Naive thymus-derived CD4-positive, alpha-beta T cell (primary cell): ENCODE measurements at regions of chr12 and their contacts with region 1.

Region 1: GRCh38 chr12:57213058-57213715 is 3.4 kb upstream of the NXPH4 start:
- DNase-seq: peak; percentile 67 to 86 (median 81)
- ATAC-seq: peak; percentile 84
- H3K4me3 ChIP-seq: no peak overlapping the region
- H3K4me3 Mint-ChIP-seq: peak overlapping the region in 8 of 10 donors; percentile 5 to 42 (median 24)
- H3K27ac ChIP-seq: no peak overlapping the region
- H3K27ac Mint-ChIP-seq: peak overlapping the region in 4 of 9 donors; percentile 10 to 90 (median 50)
- H3K4me1 ChIP-seq: peaks cover 27 to 34% of the 10 kb centered on the region in 2 donors
- H3K4me1 Mint-ChIP-seq: peaks cover 28 to 40% (median 34%) of the 10 kb centered on the region in 7 donors
- H3K27me3 ChIP-seq: peaks cover 9 to 41% of the 10 kb centered on the region in 2 donors
- H3K27me3 Mint-ChIP-seq: peaks cover 38 to 45% (median 40%) of the 10 kb centered on the region in 5 donors

Region 2: GRCh38 chr12:57229634-57230380 is 16.6 kb after region 1 on chr12 and contains the start of gene SHMT2:
- CTCF ChIA-PET with region 1: interaction called, 40 read pairs
- POLR2A ChIA-PET with region 1: interaction called, 13 read pairs
- intact Hi-C with region 1: loop called (anchors 1 kb)
- DNase-seq: peak; percentile 73 to 92 (median 88)
- ATAC-seq: peak; percentile 62
- H3K4me3 ChIP-seq: peak within 1 kb of the TSS; percentile 82
- H3K4me3 Mint-ChIP-seq: peak within 1 kb of the TSS; percentile 88 to 99 (median 92)
- H3K27ac ChIP-seq: peak within 1 kb of the TSS; percentile 69
- H3K27ac Mint-ChIP-seq: peak within 1 kb of the TSS; percentile 3 to 95 (median 84)
- H3K4me1 ChIP-seq: peaks cover 21 to 46% of the 10 kb centered on the region in 2 donors
- H3K4me1 Mint-ChIP-seq: peaks cover 38 to 66% (median 55%) of the 10 kb centered on the region in 7 donors
- H3K27me3 ChIP-seq: peaks cover 6 to 12% of the 10 kb centered on the region in 2 donors
- H3K27me3 Mint-ChIP-seq: peaks cover 11 to 28% (median 23%) of the 10 kb centered on the region in 5 donors
- total RNA-seq, gene SHMT2: 21.7 to 175 (median 36.1) TPM

Region 3: DNA sequence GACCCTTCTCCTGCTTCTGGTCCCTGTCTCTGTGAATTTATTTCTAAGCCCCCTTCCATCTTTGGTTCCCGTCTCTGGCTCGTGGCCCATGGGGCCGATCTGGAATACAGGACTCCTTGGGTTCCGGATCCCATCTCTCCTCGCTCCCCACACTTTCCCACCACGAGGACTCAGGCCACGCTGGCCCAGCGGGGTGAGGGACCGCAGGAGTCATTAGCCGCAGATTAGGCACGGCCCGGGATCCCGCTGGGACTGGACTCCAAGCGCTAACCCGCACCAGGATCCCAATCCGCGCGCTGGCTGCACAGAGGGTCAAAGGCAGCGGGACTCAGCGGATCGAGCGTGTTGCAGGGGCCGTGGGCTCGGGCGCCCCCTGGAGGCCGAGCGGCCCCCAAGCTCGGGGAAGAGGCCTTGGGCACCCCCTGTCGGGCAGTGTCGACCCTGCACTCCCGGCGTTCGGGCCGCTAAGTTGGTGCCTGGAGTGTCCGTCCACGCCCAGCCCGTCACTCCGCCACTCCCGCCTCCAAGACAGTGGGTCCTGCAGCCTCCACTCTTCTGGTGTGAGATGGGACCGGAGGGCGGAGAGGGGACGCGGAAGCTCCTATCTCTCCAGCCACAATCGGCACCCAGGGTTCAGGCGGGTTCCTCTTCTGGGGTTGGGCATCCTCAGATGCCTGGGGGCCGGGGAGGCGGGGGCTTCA is 25.8 kb after region 1 on chr12:
- CTCF ChIA-PET with region 1: interaction called, 156 read pairs
- POLR2A ChIA-PET with region 1: interaction called, 23 read pairs
- intact Hi-C with region 1: loop called (anchors 1 kb)
- DNase-seq: peak; percentile 72 to 94 (median 85)
- ATAC-seq: peak; percentile 89
- H3K4me3 ChIP-seq: peak overlapping the region; percentile 80
- H3K4me3 Mint-ChIP-seq: peak overlapping the region; percentile 87 to 99 (median 95)
- H3K27ac ChIP-seq: no peak overlapping the region
- H3K27ac Mint-ChIP-seq: peak overlapping the region in 6 of 9 donors; percentile 24 to 83 (median 64)
- H3K4me1 ChIP-seq: peaks cover 45 to 70% of the 10 kb centered on the region in 2 donors
- H3K4me1 Mint-ChIP-seq: peaks cover 52 to 82% (median 66%) of the 10 kb centered on the region in 7 donors
- H3K27me3 ChIP-seq: peaks cover 7 to 18% of the 10 kb centered on the region in 2 donors
- H3K27me3 Mint-ChIP-seq: peaks cover 48 to 72% (median 55%) of the 10 kb centered on the region in 5 donors